ENCODE measurements at regions of chr2 and their contacts with region 1.

Region 1: GRCh38 chr2:10043906-10044601 is 704 bp downstream of the KLF11 start:
- DNase-seq: peak; percentile 89 to 98 (median 96)
- ATAC-seq: peak; percentile 75
- H3K4me3 ChIP-seq: peak overlapping the region; percentile 46 to 57
- H3K27ac ChIP-seq: peak overlapping the region; percentile 91 to 94
- H3K4me1 ChIP-seq: peaks cover 3 to 73% of the 10 kb centered on the region in 2 donors
- H3K27me3 ChIP-seq: peaks cover 0 to 8% of the 10 kb centered on the region in 2 donors
- CTCF ChIP-seq: no peak

Region 2: GRCh38 chr2:9815840-9816279 is 228.2 kb before region 1 on chr2:
- intact Hi-C with region 1: loop called in 1 of 2 experiments (anchors 5 kb)
- DNase-seq: peak in 1 of 4 donors; percentile 30
- ATAC-seq: no peak
- H3K4me3 ChIP-seq: no peak overlapping the region
- H3K27ac ChIP-seq: no peak overlapping the region
- H3K4me1 ChIP-seq: peaks cover 8 to 18% of the 10 kb centered on the region in 2 donors
- H3K27me3 ChIP-seq: no peaks in the 10 kb centered on the region
- CTCF ChIP-seq: no peak

Region 3: DNA sequence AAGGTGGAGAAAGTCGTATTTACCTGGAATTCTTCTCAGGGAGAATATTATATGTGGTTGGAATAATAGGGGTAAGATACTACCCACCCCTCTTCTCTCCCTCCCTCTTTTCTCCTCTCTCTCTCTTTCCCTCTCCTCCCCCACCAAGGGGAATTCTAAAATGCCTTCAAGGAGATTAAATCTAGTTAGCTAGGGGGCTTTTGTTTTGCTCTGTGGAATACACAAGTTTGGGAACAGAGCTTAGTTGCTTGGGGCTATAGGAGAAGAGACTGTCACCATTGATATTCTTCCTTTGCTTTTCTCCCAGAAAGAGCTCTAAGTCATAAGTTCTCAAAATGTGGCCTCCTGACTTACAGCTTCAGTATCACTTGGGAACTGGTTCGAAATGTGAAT is 166.3 kb before region 1 on chr2:
- intact Hi-C with region 1: no loop called
- DNase-seq: no peak
- ATAC-seq: no peak
- H3K4me3 ChIP-seq: no peak overlapping the region
- H3K27ac ChIP-seq: no peak overlapping the region
- H3K4me1 ChIP-seq: no peaks in the 10 kb centered on the region
- H3K27me3 ChIP-seq: no peaks in the 10 kb centered on the region
- CTCF ChIP-seq: no peak

Region 4: DNA sequence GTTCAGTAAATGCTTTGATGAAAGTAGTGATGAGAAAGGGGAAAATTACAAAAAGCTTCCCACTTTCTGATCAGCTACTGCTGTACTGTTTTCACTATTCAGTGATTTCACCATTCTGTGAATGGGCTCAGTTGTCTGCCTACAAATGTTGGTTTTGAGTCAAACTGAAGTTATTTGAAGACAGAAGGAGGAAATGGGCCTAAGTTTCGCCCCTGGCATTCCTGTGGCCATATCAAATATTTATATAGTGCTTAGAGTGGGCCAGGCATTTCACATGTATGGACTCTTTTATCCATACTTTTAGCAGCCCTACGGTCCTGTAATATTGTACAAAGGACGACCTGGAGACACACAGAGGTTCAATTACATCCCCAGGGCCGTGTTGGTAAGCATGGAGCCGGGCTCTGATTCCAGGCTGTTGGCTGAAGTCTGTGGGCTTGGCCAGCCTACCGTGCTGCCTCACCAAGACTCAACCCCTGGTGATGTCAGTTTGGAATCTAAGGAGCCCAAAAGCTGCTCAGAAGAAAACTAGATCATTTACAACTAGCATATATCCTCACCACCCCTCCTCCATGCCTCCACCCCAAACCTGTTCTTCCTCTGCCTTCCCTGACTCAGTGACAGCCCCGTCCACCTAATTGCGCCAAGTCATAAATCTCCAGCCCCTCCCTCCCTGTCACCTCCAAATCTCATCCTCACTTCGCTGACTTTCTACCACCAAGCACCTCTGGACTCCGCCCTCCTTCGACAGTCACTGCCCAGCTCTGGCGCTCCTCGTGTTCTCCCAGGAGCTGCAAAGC is 102.7 kb before region 1 on chr2:
- intact Hi-C with region 1: no loop called
- DNase-seq: no peak
- ATAC-seq: peak; percentile 23
- H3K4me3 ChIP-seq: no peak overlapping the region
- H3K27ac ChIP-seq: peak overlapping the region in 1 of 2 donors; percentile 7
- H3K4me1 ChIP-seq: no peaks in the 10 kb centered on the region
- H3K27me3 ChIP-seq: peaks cover 0 to 25% of the 10 kb centered on the region in 2 donors
- CTCF ChIP-seq: no peak

Region 5: GRCh38 chr2:9984217-9984739 is 59.8 kb before region 1 on chr2:
- intact Hi-C with region 1: loop called in 1 of 2 experiments (anchors 10 kb)
- DNase-seq: peak in 1 of 4 donors; percentile 53
- ATAC-seq: peak; percentile 84
- H3K4me3 ChIP-seq: no peak overlapping the region
- H3K27ac ChIP-seq: no peak overlapping the region
- H3K4me1 ChIP-seq: peaks cover 0 to 14% of the 10 kb centered on the region in 2 donors
- H3K27me3 ChIP-seq: peaks cover 0 to 13% of the 10 kb centered on the region in 2 donors
- CTCF ChIP-seq: peak; percentile 63 to 70